HAP-1 (cell line): ENCODE measurements at regions of chr1 and their contacts with region 1.

Region 1: GRCh38 chr1:17485280-17485679 is 45.8 kb upstream of the RCC2 start:
- DNase-seq: peak; percentile 59 to 84
- H3K4me3 ChIP-seq: no peak overlapping the region
- H3K4me1 ChIP-seq: no peaks in the 10 kb centered on the region
- H3K27me3 ChIP-seq: no peaks in the 10 kb centered on the region

Region 2: GRCh38 chr1:17419626-17420328 is 65.5 kb before region 1 on chr1:
- in situ Hi-C with region 1: loop called (anchors 5 kb)
- DNase-seq: peak; percentile 61 to 86
- H3K4me3 ChIP-seq: no peak overlapping the region
- H3K4me1 ChIP-seq: peaks cover 13% of the 10 kb centered on the region
- H3K27me3 ChIP-seq: no peaks in the 10 kb centered on the region